ENCODE measurements at regions of chr2 and their contacts with region 1.

Region 1: GRCh38 chr2:230987137-230988020 is 8.5 kb upstream of the SPATA3 start:
- DNase-seq: peak; percentile 86
- ATAC-seq: peak; percentile 93

Region 2: DNA sequence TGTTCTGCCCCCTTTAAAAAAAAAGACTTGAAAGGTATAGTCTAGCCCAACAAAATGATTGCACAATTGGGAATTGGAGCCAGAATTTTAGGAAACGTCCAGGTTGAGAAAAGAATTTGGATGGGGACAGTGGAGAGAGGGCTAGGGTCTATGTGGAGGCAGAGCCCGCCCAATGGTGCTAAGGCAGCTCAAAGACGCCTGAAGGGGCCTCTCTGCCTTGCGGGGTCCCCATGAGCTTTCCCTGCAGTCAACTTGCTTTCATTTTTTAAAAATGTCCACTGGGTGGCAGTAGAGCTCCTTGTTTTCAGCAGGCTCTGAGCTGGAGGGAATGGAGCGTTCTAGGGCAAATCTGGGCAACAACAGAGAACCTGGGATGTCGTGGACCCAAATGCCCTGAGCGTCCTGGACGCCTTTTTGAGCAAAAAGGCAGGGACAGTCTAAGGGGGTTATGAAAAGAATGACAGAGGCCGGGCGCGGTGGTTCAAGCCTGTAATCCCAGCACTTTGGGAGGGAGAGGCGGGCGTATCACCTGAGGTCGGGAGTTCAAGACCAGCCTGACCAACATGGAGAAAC is 162.9 kb before region 1 on chr2:
- intact Hi-C with region 1: loop called (anchors 2 kb)
- DNase-seq: no peak
- ATAC-seq: peak; percentile 70

Region 3: DNA sequence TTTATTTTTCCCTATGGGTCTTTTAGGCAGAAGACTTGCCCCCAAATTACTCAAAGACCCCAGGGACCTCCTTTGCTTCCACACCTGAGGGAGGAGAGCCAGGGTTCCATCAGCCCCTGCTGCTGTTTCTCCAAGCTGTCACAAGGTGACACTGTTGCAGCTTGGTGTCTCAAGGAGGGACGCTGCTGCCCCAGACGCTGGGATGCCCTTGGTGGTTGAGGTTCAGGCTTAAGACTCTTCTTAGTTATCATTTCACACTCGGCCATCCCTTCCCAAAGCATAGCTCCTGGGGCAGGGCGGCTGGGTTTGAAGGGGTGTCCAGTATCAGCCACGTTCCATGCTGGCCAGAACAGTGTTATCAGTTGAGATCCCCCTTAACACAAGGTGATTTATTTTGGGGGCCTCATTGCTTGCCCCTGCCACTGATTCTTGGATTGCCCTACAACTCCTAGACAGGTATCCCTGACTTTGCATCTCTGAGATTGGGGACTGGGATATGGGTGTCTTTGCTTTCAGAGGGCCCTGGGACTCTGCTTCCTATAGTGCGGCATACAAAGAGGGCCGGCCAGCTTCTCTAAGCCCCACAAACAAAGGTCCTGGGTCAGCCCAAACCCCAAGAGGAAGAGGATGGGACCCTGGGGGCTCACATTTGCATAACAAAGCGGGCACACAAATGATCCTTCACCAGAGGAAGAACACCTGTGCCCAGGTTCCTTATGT is 85.0 kb before region 1 on chr2:
- intact Hi-C with region 1: loop called (anchors 2 kb)
- DNase-seq: no peak
- ATAC-seq: peak; percentile 64

Region 4: GRCh38 chr2:231037731-231038482 is 50.5 kb after region 1 on chr2:
- intact Hi-C with region 1: no loop called
- DNase-seq: no peak
- ATAC-seq: no peak

Region 5: DNA sequence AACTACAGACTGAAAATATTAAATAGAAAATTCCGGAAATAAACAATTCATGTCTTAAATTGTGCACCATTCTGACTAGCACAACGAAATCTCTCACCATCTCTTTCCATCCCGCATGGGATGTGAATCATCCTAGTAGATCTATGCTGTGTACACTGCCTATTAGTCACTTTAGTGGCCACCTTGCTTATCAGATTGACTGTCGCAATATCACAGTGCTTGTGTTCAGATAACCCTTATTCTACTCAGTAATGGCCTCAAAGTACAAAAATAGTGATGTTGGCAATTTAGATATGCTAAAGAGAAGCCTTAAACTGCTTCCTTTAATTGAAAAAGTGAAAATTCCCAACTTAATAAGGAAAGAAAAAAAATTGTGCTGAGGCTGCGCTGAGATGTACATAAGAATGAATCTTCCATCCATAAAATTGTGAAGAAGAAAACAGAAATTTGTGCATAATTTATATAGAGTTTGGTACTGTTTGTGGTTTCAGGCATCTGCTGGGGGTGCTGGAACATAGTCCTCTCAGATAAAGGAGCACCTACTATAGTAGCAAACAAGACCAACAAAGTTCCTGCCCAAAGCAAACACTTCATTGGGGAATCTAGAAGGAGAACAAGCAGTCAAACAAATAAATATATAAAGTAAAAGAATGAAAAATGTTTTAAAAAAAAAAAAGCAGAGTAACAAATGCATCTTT is 81.3 kb after region 1 on chr2:
- intact Hi-C with region 1: no loop called
- DNase-seq: no peak
- ATAC-seq: no peak

Measured in Right ventricle myocardium superior (tissue), 1 donor.